Testis (tissue), 5 donors: ENCODE measurements at regions of chr6 and their contacts with region 1.

Region 1: GRCh38 chr6:169824021-169824420 is 72.6 kb downstream of the ERMARD start:
- DNase-seq: peak; percentile 1
- H3K4me3 ChIP-seq: no peak overlapping the region
- H3K27ac ChIP-seq: no peak overlapping the region
- H3K4me1 ChIP-seq: no peaks in the 10 kb centered on the region
- H3K27me3 ChIP-seq: no peaks in the 10 kb centered on the region
- CTCF ChIP-seq: no peak
- POLR2A ChIP-seq: no peak

Region 2: DNA sequence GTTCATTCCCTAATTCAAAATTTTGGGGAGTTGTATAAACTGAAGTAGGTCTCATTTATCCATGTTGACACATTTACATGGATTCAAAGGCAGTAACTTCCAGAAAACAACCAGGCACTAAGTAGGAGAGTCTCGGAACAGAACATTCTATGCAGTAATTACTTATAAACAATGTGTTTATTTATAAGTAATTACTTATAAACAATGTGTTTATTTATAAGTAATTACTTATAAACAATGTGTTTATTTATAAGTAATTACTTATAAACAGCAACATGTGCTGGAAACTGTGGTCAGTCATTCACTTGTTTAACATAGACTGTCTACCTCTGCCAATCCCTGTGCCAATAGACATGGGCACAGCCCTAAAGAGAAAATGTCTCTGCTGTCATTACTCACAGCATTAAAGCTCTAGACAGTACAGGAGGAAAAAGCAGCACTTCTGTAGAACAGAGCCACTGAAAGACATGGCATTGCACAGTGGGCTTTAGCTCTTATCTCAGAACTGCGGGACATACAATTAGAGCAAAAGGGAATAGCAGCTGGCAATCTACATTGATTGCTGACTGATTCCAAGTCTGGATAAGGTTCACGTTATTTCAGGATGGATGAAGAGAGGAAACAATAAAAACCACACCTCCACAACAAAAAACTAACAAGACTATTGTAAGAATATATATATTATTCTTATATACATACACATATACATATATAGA is 310.4 kb before region 1 on chr6:
- intact Hi-C with region 1: no loop called
- DNase-seq: no peak
- H3K4me3 ChIP-seq: no peak overlapping the region
- H3K27ac ChIP-seq: no peak overlapping the region
- H3K4me1 ChIP-seq: no peaks in the 10 kb centered on the region
- H3K27me3 ChIP-seq: no peaks in the 10 kb centered on the region
- CTCF ChIP-seq: no peak
- POLR2A ChIP-seq: no peak

Region 3: DNA sequence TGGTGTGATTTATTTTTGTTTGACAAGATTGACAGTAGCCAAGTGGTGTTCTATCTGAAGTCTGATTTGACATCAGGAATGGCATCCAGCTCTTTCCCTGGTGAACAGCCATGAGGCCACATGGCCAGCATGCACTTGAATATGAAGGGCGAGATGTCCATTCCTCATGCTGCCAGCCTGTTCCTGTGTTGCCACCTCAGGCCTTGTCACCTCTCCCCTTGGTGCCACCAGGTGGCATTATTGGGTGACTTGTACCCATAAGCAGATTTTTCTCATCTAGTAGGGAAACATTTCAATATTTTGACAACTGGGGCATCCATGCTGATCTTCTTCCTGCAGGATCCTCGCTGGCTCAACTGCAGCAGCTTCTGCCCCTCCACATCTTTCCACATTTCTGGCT is 126.5 kb after region 1 on chr6:
- intact Hi-C with region 1: no loop called
- DNase-seq: no peak
- H3K4me3 ChIP-seq: no peak overlapping the region
- H3K27ac ChIP-seq: no peak overlapping the region
- H3K4me1 ChIP-seq: no peaks in the 10 kb centered on the region
- H3K27me3 ChIP-seq: no peaks in the 10 kb centered on the region
- CTCF ChIP-seq: peak in 1 of 3 experiments; percentile 9
- POLR2A ChIP-seq: no peak

Region 4: GRCh38 chr6:169990095-169991030 is 166.3 kb after region 1 on chr6:
- intact Hi-C with region 1: no loop called
- DNase-seq: peak; percentile 40
- H3K4me3 ChIP-seq: no peak overlapping the region
- H3K27ac ChIP-seq: no peak overlapping the region
- H3K4me1 ChIP-seq: peaks cover 5% of the 10 kb centered on the region
- H3K27me3 ChIP-seq: no peaks in the 10 kb centered on the region
- CTCF ChIP-seq: no peak
- POLR2A ChIP-seq: no peak

Region 5: GRCh38 chr6:170529839-170530469 is 705.9 kb after region 1 on chr6:
- intact Hi-C with region 1: loop called (anchors 10 kb)
- DNase-seq: peak; percentile 87
- H3K4me3 ChIP-seq: no peak overlapping the region
- H3K27ac ChIP-seq: no peak overlapping the region
- H3K4me1 ChIP-seq: no peaks in the 10 kb centered on the region
- H3K27me3 ChIP-seq: no peaks in the 10 kb centered on the region
- CTCF ChIP-seq: peak; percentile 49 to 82 (median 72)
- POLR2A ChIP-seq: no peak